Activated B cell treated with CpG ODN at 0.5 μM for 24 hours (primary cell): ENCODE measurements at regions of chr16 and their contacts with region 1.

Region 1: GRCh38 chr16:23518435-23518891 is 8.2 kb upstream of the GGA2 start:
- DNase-seq: no peak
- ATAC-seq: peak; percentile 59
- H3K4me3 Mint-ChIP-seq: peak overlapping the region; percentile 64
- H3K27ac Mint-ChIP-seq: peak overlapping the region; percentile 86
- H3K4me1 Mint-ChIP-seq: peaks cover 68% of the 10 kb centered on the region
- H3K27me3 Mint-ChIP-seq: no peaks in the 10 kb centered on the region
- CTCF ChIP-seq: no peak

Region 2: DNA sequence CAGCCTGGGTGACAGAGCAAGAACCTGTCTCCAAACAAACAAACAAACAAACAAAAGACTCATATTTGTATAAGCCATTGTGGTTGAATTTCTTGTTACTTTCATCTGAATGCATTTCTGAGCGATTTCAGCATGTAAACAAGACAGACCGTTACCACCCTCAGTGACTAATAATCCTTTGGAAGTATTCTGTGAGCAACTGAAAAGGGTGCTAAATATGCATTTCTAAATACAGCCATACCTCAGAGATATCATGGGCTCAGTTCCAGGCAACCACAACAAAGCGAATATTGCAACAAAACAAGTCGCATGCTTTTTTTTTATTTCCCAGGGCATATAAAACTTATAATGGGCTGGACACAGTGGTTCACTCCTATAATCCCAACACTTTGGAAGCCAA is 478.2 kb before region 1 on chr16:
- CTCF ChIA-PET with region 1: no interaction called
- POLR2A ChIA-PET with region 1: no interaction called
- intact Hi-C with region 1: no loop called
- DNase-seq: no peak
- ATAC-seq: no peak
- H3K4me3 Mint-ChIP-seq: no peak overlapping the region
- H3K27ac Mint-ChIP-seq: no peak overlapping the region
- H3K4me1 Mint-ChIP-seq: peaks cover 2% of the 10 kb centered on the region
- H3K27me3 Mint-ChIP-seq: peaks cover 7% of the 10 kb centered on the region
- CTCF ChIP-seq: no peak

Region 3: DNA sequence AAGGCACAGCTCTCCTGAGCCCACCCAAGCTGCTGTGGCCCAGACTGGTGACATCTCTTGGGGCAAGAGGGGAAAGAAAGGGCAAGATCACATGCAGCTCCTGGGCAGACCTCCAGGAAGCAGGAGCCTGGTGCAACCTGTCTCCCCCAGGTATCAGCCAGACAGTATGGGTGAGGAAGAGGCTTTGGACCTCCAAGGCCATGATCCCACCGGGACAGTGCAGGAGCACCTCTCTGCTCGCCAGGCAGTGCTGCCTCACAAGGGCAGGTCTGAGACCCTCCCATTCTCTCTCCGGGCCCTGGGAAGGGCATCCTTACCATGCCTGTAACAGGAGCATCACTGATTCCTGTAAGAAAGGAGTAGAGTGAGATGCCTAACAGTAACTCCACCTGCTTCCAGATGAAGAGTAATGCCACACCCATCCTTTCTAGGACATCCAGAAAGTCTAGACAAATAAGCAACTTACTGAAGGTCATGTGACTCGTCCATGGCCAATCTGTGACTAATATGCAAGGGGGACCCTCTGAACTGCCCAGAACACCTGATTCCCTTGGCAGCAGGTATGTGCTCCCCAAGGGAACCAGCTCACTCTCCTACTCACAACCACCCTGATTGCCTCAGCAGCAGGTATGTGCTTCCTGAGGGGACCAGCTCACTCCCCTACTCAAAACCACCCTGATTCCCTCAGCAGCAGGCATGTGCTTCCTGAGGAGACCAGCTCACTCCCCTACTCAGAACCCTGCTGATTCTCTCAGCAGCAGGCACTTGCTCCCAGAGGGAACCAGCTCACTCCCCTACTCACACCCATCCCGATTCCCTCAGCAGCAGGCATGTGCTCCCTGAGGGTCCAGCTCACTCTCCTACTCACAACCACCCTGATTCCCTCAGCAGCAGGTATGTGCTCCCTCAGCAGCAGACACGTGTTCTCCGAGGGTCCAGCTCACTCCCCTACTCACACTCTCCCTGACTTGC is 39.6 kb before region 1 on chr16:
- CTCF ChIA-PET with region 1: no interaction called
- POLR2A ChIA-PET with region 1: no interaction called
- intact Hi-C with region 1: loop called (anchors 5 kb)
- DNase-seq: no peak
- ATAC-seq: no peak
- H3K4me3 Mint-ChIP-seq: no peak overlapping the region
- H3K27ac Mint-ChIP-seq: peak overlapping the region; percentile 70
- H3K4me1 Mint-ChIP-seq: peaks cover 24% of the 10 kb centered on the region
- H3K27me3 Mint-ChIP-seq: no peaks in the 10 kb centered on the region
- CTCF ChIP-seq: no peak

Region 4: DNA sequence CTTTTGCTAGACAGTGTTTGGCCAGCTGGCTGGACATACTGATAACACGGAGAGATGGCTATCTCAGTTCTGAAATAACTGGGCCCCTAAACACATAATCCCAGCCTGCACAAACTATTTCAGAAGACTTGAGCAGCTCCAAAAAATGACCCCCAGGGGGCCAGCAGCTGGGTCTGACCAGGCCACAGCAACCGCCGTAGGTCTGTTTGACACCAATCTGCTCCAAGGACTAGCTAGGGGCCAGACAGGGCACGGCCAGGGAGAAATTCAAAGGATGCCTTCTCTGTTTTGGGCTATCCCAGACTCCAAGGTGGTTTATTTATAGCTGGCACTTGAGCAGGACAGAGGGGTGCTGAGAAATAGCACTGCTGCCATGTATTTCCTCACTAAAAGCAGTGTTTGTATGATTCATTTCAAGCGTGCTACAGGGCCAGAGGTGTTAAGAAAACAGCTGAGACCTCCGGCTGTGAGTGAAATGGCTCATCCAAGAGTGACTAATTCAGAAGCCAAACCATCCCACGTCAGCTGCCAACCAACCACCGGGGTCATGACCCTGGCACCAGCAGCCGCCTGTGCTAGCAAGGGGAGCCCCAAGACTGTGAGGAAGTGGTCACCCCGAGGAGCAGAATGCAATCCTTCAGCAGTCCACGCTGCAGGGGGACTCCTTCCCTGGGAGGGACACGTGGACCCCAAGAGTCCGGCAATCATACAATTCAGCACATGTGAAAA is 13.8 kb before region 1 on chr16:
- CTCF ChIA-PET with region 1: interaction called, 11 read pairs
- POLR2A ChIA-PET with region 1: interaction called, 209 read pairs
- intact Hi-C with region 1: loop called (anchors 1 kb)
- DNase-seq: peak; percentile 42
- ATAC-seq: peak; percentile 63
- H3K4me3 Mint-ChIP-seq: peak overlapping the region; percentile 90
- H3K27ac Mint-ChIP-seq: peak overlapping the region; percentile 95
- H3K4me1 Mint-ChIP-seq: peaks cover 97% of the 10 kb centered on the region
- H3K27me3 Mint-ChIP-seq: no peaks in the 10 kb centered on the region
- CTCF ChIP-seq: no peak